PC-9 (cell line): ENCODE measurements at regions of chr17 and their contacts with region 1.

Region 1: DNA sequence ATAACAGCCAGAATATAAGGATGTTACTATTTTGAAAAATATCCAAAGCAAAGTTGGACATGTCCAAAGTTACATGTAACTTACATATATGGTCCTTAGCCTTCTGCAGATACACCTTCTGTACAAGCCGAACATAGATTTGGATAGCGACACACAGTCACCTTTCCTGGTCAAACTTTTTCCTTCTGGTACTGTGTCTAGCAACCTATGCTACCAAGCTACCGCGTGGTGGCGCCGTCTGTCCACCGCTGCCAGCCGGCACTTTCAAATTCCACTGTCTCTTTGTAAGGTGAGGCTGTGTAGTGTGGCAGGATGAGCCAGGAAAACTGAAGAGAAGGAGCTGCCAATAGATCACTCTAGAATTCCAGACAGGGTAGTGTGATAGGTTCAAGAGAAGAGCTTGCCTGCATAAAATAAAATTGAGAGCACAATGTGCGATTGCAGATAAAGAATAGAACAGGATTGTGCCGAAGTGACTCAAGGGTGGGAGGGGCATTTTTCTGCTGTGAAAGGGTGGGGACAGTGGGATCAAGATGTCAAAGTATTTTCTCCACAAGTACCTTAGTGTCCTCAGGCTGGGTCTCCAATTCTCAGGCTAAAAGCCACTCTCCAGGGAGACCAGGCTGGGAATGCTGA is 366.9 kb downstream of the SLC39A11 start:
- DNase-seq: peak in 1 of 2 experiments; percentile 69
- H3K4me3 ChIP-seq: no peak overlapping the region
- H3K27ac ChIP-seq: no peak overlapping the region
- H3K4me1 ChIP-seq: peaks cover 33% of the 10 kb centered on the region
- H3K27me3 ChIP-seq: no peaks in the 10 kb centered on the region
- CTCF ChIP-seq: peak; percentile 89

Region 2: GRCh38 chr17:72788950-72789585 is 63.5 kb after region 1 on chr17:
- CTCF ChIA-PET with region 1: no interaction called
- POLR2A ChIA-PET with region 1: no interaction called
- intact Hi-C with region 1: no loop called
- DNase-seq: peak in 1 of 2 experiments; percentile 17
- H3K4me3 ChIP-seq: no peak overlapping the region
- H3K27ac ChIP-seq: no peak overlapping the region
- H3K4me1 ChIP-seq: no peaks in the 10 kb centered on the region
- H3K27me3 ChIP-seq: no peaks in the 10 kb centered on the region
- CTCF ChIP-seq: no peak

Region 3: DNA sequence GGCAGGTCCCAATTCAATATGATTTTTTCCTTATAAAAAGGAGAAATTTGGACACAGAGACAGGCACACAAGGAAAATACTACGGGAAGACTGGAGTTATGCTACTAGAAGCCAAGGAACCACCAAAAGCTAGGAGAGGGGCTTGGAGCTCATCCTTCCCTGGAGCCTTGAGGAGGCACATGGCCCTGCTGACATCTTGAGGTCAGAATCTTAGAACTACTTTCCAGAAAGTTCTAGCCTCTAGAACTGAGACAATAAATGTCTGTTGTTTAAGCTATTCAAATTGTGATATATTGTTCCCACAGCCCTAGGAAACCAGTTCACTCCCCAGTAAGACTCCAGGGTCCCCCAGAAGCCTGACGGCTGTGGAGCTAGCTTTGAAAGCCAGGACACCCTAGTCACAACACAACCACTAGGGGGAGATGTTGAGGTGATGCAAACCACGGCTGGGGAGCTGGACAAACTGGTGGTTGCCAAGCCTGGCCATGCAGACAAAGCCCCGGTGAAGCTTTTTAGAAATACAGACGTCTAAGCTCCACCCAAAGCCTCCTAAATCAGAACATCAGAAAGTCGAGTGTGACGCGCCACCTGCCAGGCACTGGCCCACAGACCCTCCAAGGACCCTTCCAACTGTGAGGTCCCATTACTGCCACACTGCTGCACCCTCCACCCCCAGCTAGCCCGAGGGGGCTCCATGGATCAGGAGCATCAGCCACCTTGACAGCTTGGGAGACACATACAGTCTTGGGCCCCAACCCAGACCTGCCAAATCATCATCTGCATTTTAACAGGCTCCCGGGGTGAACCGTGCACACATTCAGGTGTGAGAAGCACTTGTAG is 260.6 kb after region 1 on chr17:
- CTCF ChIA-PET with region 1: interaction called, 6 read pairs
- POLR2A ChIA-PET with region 1: no interaction called
- intact Hi-C with region 1: loop called (anchors 2 kb)
- DNase-seq: peak in 1 of 2 experiments; percentile 47
- H3K4me3 ChIP-seq: no peak overlapping the region
- H3K27ac ChIP-seq: peak overlapping the region; percentile 89
- H3K4me1 ChIP-seq: peaks cover 28% of the 10 kb centered on the region
- H3K27me3 ChIP-seq: no peaks in the 10 kb centered on the region
- CTCF ChIP-seq: peak; percentile 90

Region 4: DNA sequence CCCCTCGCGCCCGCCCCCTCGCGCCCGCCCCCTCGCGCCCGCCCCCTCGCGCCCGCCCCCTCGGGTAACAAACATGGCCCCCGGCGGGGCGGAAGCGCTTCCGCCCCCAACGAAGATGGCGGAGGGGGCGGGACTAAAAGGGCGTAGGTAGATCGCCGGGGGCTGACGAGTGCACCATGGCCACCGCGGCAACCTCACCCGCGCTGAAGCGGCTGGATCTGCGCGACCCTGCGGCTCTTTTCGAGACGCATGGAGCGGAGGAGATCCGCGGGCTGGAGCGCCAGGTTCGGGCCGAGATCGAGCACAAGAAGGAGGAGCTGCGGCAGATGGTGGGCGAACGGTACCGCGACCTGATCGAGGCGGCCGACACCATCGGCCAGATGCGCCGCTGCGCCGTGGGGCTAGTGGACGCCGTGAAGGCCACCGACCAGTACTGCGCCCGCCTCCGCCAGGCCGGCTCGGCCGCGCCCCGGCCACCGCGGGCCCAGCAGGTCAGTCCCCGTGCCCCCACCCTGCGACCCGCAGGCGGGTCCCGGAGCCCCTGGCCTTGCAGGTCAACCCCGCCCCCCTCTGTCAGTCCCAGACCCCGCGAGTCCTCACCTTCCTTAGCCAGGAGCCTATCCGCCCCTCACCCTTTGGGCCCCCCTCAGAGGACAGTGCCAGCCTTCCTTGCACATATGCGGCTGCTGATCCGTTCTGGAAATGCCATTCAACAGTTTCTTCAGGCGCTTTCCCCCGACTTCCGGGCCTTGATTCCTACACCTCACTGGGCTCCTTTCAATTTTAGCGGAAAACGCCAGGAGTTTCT is 467.5 kb after region 1 on chr17 and contains the start of gene COG1:
- CTCF ChIA-PET with region 1: interaction called, 8 read pairs
- POLR2A ChIA-PET with region 1: no interaction called
- intact Hi-C with region 1: loop called (anchors 1 kb)
- DNase-seq: peak; percentile 55 to 67
- H3K4me3 ChIP-seq: peak within 1 kb of the TSS; percentile 97
- H3K27ac ChIP-seq: peak within 1 kb of the TSS; percentile 77
- H3K4me1 ChIP-seq: 0 out of 2 replicates have a peak, but pooled peaks cover 4% of the 10 kb centered on the region
- H3K27me3 ChIP-seq: no peaks in the 10 kb centered on the region
- CTCF ChIP-seq: no peak
- total RNA-seq, gene COG1: 24.8 and 25.6 TPM in 2 replicates

Region 5: GRCh38 chr17:73255671-73256181 is 530.2 kb after region 1 on chr17:
- CTCF ChIA-PET with region 1: no interaction called
- POLR2A ChIA-PET with region 1: no interaction called
- intact Hi-C with region 1: loop called (anchors 1 kb)
- DNase-seq: peak; percentile 51 to 63
- H3K4me3 ChIP-seq: no peak overlapping the region
- H3K27ac ChIP-seq: no peak overlapping the region
- H3K4me1 ChIP-seq: no peaks in the 10 kb centered on the region
- H3K27me3 ChIP-seq: no peaks in the 10 kb centered on the region
- CTCF ChIP-seq: peak; percentile 99

Region 6: DNA sequence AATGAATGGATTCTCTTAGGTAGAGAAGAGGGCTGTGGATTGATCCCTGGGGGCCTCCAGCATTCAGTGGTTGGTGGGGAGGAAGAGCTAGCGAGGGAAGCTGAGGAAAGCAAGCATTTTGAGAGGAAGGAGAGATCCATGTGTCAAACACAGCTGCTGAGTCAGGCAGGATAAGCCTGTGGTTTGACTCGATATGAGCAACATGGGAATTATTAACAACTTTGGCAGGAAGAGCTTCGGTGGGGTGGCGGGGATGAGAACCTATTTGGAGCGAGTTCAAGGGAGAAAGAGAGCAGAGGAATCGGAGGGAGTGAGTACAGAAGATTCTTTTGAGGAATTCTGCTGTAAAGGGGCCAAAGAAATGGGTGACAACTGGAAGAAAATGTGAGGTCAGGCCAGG is 645.7 kb after region 1 on chr17:
- CTCF ChIA-PET with region 1: interaction called, 10 read pairs
- POLR2A ChIA-PET with region 1: no interaction called
- intact Hi-C with region 1: loop called (anchors 2 kb)
- DNase-seq: no peak
- H3K4me3 ChIP-seq: no peak overlapping the region
- H3K27ac ChIP-seq: no peak overlapping the region
- H3K4me1 ChIP-seq: no peaks in the 10 kb centered on the region
- H3K27me3 ChIP-seq: peaks cover 32% of the 10 kb centered on the region
- CTCF ChIP-seq: no peak

Region 7: GRCh38 chr17:74203439-74204240 is 1478.1 kb after region 1 on chr17 and contains the start of gene RPL38:
- CTCF ChIA-PET with region 1: interaction called, 3 read pairs
- POLR2A ChIA-PET with region 1: no interaction called
- intact Hi-C with region 1: loop called (anchors 10 kb)
- DNase-seq: peak; percentile 90 to 91
- H3K4me3 ChIP-seq: peak within 1 kb of the TSS; percentile 93
- H3K27ac ChIP-seq: peak within 1 kb of the TSS; percentile 80
- H3K4me1 ChIP-seq: peaks cover 17% of the 10 kb centered on the region
- H3K27me3 ChIP-seq: peaks cover 46% of the 10 kb centered on the region
- CTCF ChIP-seq: peak; percentile 89
- total RNA-seq, gene RPL38: 761 and 961 TPM in 2 replicates